ENCODE measurements at regions of chr11 and their contacts with region 1.

Region 1: DNA sequence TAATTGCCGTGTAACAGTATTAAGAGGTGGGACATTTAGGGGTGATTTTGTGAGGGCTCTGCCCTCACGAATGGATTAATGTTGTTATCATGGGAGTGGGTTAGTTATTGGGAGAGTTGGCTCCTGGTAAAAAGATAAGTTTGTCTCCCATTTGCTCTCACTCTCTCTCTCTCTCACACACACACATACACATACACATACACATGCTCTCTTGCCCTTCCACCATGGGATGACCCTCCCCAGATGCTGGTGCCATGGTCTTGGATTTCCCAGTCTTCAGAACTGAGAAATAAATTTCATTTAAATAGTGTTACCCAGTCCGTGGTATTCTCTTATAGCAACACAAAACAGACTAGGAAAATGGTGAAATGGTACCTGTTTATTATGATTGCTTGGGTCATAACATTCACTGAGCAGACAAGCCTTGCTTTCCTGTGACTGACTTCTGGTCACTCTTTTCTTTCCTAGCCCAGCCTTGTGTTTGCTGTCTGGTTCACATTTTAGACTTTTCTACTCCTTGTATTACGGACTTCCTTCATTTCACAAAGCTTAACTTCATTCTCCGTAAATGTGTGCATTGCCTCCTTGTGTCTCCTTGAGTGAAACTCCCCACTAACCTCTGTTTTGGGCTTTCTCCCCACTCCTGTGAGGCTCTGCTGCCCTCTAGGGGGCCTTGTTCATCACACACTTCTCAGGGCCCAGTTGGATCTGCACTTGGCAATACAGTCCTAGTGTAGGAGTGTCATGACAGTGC is 206.5 kb upstream of the CTSC start:
- DNase-seq: peak; percentile 90
- H3K4me3 ChIP-seq: no peak overlapping the region
- H3K27ac ChIP-seq: no peak overlapping the region
- H3K27me3 ChIP-seq: no peaks in the 10 kb centered on the region
- CTCF ChIP-seq: peak; percentile 100

Region 2: DNA sequence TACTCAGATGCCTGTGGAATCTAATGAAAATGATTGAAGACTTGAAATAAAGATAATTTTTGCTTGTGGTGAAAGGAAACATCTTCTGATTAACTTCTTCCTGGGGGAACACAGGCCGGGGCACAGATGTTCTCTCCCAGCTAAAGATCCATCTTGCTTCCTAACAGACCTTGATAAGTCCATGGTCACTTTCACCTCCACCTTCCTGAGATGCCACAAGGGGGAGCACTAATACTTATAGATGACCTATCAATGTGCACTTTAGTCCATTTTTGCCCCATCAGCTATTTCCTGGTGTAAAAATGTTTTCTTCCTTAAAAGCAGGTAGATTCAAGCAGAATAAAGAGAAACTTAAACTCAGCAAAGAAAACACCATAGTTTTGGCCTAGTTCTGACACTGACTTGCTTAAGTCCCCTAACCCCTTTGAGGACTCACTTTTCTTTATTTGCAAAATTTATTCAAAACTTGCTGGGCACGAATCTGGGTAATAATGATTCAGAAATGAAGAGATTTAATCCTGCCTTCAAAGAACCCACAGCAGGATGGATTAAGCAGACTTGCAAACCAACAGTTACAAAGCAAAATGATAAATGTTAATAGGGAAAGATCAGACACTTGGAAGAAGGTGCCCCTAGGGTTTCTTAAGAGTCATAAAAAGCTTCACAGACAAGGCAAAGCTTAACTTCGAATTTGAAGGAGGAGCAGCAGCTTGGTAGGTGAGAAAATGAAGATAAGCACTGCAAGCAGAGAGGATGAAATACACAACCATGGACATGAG is 527.5 kb before region 1 on chr11:
- CTCF ChIA-PET with region 1: interaction called, 169 read pairs
- POLR2A ChIA-PET with region 1: no interaction called
- DNase-seq: peak; percentile 72
- H3K4me3 ChIP-seq: no peak overlapping the region
- H3K27ac ChIP-seq: no peak overlapping the region
- H3K27me3 ChIP-seq: no peaks in the 10 kb centered on the region
- CTCF ChIP-seq: peak; percentile 81

Region 3: GRCh38 chr11:88295028-88295427 is 249.1 kb before region 1 on chr11:
- CTCF ChIA-PET with region 1: interaction called, 14 read pairs
- POLR2A ChIA-PET with region 1: no interaction called
- DNase-seq: no peak
- H3K4me3 ChIP-seq: no peak overlapping the region
- H3K27ac ChIP-seq: no peak overlapping the region
- H3K27me3 ChIP-seq: no peaks in the 10 kb centered on the region
- CTCF ChIP-seq: no peak

Region 4: DNA sequence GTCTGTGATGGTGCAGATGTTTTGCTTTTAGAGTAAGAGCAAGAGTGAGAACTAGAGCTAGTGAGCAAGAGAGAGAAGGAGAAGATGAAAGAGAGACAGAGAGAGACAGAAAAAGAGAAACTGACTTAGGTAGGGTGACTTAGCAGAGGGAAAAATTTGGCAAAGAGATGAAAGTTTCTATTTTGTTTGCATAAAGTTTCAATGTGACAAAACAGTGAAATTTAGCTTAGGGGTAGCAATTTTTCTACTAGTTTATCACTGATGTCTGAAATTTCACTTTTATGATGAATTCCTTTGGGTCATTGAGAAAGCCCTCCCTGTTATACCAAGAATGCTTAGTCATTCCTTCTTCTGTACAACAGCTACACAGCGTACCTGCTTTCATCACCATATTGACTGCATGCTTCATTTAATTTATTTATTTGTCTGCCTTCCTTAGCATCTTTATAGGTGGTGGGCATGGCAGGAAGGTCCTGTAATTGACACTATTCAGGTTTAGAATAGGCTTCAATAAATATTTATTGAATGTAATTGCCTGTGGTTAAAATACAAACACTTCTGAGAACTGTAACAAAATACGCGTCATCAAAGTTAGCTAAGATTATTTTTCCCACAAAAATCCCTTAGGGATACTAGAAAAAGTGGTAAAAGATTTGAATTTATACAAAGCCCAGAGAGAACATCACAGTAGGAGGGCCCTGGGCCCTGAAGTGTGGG is 186.6 kb before region 1 on chr11:
- CTCF ChIA-PET with region 1: interaction called, 17 read pairs
- POLR2A ChIA-PET with region 1: no interaction called
- DNase-seq: no peak
- H3K4me3 ChIP-seq: no peak overlapping the region
- H3K27ac ChIP-seq: no peak overlapping the region
- H3K27me3 ChIP-seq: no peaks in the 10 kb centered on the region
- CTCF ChIP-seq: no peak